Right ventricle myocardium inferior (tissue), 1 donor: ENCODE measurements at regions of chr1 and their contacts with region 1.

Region 1: GRCh38 chr1:178916448-178917174 is 45.7 kb upstream of the ANGPTL1 start:
- DNase-seq: no peak
- ATAC-seq: no peak

Region 2: DNA sequence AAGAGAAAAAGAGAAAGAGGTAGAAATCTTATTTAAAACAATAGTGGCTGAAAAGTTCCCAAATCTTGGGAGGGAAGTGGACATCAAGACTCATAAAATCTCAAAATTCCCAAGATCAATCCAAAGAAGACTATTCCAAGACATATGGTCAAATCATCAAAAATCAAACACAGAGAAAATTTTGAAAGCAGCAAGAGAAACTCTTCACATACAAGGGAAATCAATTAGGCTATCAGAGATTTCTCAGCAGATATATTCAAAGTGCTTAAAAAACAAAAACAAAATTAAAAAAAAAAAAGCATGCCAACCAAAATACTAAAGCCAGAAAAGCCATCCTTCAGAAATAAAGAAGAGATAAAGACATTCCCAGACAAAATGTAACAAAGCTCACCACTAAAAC is 244.2 kb before region 1 on chr1:
- intact Hi-C with region 1: no loop called
- DNase-seq: no peak
- ATAC-seq: no peak

Region 3: DNA sequence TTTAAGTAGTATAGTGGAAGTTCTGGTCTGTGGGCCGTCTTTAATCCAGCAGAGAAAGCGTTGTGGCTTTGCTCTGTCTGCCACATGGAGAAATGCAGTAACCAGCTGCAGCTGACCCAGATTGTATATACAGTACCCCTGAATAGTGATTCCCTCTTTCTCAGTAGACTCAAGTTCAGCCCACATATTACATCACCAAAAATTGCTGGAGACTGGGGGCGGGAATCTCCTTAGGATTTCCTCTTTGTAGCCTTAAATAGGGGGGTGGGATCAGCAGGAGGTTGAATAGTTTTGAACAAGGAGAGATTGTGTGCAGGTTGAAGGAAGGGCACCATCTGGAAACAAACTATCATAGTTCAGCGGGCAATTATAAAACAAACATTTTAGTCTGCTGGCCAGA is 45.7 kb before region 1 on chr1 and contains the start of gene ANGPTL1:
- intact Hi-C with region 1: loop called (anchors 5 kb)
- DNase-seq: no peak
- ATAC-seq: peak; percentile 70
- total RNA-seq, gene ANGPTL1: 11.5 TPM